ENCODE measurements at regions of chr9 and their contacts with region 1.

Region 1: DNA sequence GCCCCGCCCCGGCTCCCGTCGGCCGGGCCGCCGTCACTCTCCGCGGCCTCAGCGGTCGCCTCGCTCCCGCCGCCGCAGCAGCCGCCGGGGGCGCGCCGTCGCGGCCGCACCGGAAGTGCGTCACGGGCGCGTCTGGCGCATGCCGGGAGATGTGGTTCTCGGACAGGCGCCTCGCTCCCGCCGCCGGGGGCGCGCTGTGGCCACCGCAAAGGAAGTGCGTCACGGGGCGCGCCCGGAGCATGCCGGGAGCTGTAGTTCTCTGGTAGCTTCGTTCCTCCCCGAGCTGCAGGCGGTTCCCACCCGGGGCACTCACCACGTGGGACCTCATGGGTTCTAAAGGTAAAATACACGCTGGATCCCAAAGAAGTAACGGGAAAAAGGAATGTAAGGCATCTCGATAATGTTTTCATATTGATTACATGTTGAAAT is at the start of gene UBAC1:
- DNase-seq: peak; percentile 98
- ATAC-seq: peak; percentile 95
- H3K4me3 ChIP-seq: peak within 1 kb of the TSS; percentile 85
- H3K27ac ChIP-seq: peak within 1 kb of the TSS; percentile 78
- H3K4me1 ChIP-seq: peaks cover 12% of the 10 kb centered on the region
- H3K27me3 ChIP-seq: no peaks in the 10 kb centered on the region
- CTCF ChIP-seq: peak; percentile 37
- total RNA-seq, gene UBAC1: 30.1 TPM

Region 2: GRCh38 chr9:135736272-135736978 is 224.9 kb before region 1 on chr9:
- intact Hi-C with region 1: no loop called
- DNase-seq: no peak
- ATAC-seq: no peak
- H3K4me3 ChIP-seq: no peak overlapping the region
- H3K27ac ChIP-seq: no peak overlapping the region
- H3K4me1 ChIP-seq: no peaks in the 10 kb centered on the region
- H3K27me3 ChIP-seq: peaks cover 37% of the 10 kb centered on the region
- CTCF ChIP-seq: no peak

Region 3: DNA sequence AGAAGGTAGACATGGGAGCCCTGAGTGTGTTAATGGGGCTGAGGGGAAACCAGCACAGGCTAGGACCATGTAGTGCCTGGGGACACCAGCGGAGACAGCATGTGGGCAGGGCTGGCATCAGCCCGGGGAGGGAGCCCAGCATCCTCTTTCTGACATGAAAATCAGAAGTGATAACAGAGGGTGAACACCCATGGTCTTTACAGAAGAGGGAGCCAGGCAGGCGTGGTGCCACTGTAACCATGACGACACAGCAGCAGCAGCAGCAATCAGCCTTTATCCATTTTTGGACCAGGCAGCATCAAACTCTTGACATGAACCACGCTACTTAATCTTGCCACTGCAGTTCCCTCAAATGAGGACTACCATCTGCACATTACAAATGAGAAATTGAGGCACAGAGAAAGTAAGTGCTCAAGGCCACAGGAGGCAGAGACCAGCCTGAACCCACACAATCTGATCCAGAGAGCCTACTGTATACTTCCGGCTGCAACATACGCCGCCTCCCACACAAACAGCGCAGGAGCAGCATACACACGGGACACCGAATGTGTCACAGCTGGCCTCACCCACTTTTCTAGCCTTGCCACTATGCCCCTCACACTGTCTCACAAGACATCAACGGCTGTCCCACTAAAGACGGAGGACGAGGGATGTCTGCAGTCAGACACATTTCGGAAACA is 77.7 kb before region 1 on chr9:
- intact Hi-C with region 1: no loop called
- DNase-seq: no peak
- ATAC-seq: no peak
- H3K4me3 ChIP-seq: no peak overlapping the region
- H3K27ac ChIP-seq: no peak overlapping the region
- H3K4me1 ChIP-seq: peaks cover 24% of the 10 kb centered on the region
- H3K27me3 ChIP-seq: no peaks in the 10 kb centered on the region
- CTCF ChIP-seq: no peak

Region 4: DNA sequence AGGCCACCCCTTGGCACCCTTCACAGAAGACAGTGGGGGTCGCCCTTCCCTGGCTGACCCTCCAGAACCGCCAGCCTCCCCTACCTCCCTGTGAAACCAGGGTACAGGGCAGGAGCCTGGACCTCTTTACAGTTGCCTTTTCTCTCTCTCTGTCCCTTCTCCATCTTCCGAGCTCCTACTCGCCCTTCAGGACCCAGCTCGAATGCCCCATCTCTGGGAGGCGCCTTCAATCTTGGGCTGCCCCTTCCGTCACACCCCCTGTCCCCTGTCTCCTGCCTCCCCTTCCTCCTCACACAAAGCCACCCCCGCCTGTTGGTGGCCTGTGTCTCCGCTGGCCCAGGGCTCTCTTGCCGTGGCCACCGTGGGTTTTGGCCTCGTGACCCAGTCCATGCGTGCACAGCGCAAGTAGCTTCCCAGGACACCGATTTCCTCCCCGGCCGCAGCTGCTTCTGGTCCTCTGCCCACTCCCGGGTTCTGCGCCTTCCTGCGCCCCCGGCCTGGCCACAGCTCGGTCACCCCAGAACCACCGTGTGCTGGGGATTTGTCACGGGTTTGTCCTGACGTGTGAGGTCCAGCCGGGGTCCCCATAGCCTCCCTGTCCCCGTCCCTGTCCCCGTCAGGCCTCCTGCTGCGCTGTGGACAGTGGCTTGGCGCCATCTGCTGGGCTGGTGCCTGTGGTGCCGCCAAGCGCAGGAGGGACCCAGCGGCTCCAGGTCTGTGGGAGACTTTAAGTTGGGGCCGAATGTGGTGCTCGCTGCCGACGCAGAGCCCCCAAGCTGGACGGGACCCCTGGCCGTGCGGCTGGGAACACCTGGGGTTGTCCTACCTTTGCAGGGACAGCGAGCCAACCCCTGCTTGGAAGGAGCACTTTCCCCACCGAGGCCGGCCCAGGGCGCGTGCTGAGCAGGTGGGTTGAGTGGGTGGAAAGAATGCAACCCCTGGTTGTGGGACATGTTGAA is 161.4 kb after region 1 on chr9:
- intact Hi-C with region 1: loop called (anchors 2 kb)
- DNase-seq: peak; percentile 89
- ATAC-seq: peak; percentile 60
- H3K4me3 ChIP-seq: peak overlapping the region; percentile 8
- H3K27ac ChIP-seq: no peak overlapping the region
- H3K4me1 ChIP-seq: peaks cover 16% of the 10 kb centered on the region
- H3K27me3 ChIP-seq: peaks cover 5% of the 10 kb centered on the region
- CTCF ChIP-seq: peak; percentile 97